Naive thymus-derived CD4-positive, alpha-beta T cell (primary cell): ENCODE measurements at regions of chr13 and their contacts with region 1.

Region 1: DNA sequence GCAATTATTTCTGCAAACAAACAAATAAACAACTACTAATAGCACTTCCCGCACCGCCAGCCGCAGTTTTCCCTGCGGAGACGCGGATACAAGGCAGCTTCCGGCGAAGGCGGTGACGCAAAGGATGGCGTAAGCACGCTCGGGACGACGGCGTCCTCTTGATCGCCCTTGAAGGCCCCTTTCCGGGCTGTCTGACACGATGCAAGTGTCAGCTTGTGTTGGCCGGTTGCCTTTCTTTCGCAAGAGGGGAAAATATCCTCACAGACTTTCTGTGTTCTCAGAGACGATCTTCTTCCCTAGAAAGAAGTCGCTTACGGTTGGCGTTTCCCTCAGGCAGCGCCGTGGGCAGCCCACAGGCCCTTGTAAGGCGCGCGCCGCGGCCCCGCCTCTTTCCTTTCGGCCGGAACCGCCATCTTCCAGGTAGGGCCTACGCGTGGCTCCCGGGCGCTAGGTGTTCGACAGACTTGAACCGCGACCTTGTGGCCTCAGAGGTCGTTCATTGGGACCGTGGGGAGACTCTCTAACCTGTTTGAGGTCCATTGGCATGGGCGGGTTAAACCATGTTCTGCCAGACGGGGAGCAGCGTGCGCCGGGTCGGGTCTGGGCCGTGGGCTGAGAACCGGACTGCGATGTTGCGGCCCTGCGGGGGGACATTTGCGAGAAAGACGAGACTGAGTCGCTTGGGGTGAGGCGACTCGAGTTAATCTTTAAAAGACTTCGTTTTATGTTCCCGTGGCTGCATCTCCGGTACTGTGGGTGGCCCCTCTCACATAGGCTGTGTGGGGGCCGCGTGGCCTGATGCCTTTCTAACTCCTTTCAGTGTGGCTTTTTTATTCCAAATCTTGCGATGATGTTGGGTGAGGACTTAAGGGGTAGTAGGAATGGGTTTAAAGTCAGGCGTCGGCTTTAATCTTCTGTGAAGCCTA is at the start of gene RPL21:
- DNase-seq: peak; percentile 85 to 95 (median 93)
- ATAC-seq: peak; percentile 95
- H3K4me3 ChIP-seq: peak within 1 kb of the TSS; percentile 82
- H3K4me3 Mint-ChIP-seq: peak within 1 kb of the TSS; percentile 93 to 99 (median 98)
- H3K27ac ChIP-seq: peak within 1 kb of the TSS; percentile 98
- H3K27ac Mint-ChIP-seq: peak within 1 kb of the TSS; percentile 98 to 100 (median 99)
- H3K4me1 ChIP-seq: peaks cover 29 to 35% of the 10 kb centered on the region in 2 donors
- H3K4me1 Mint-ChIP-seq: peaks cover 32 to 78% (median 49%) of the 10 kb centered on the region in 7 donors
- H3K27me3 ChIP-seq: no peaks in the 10 kb centered on the region
- H3K27me3 Mint-ChIP-seq: no peaks in the 10 kb centered on the region
- total RNA-seq, gene RPL21: 962 to 2,668 (median 2,384) TPM

Region 2: GRCh38 chr13:26253787-26254582 is 997.4 kb before region 1 on chr13 and contains the start of gene CDK8:
- CTCF ChIA-PET with region 1: no interaction called
- POLR2A ChIA-PET with region 1: no interaction called
- intact Hi-C with region 1: loop called (anchors 1 kb)
- DNase-seq: peak; percentile 83 to 95 (median 93)
- ATAC-seq: peak; percentile 92
- H3K4me3 ChIP-seq: peak within 1 kb of the TSS; percentile 95
- H3K4me3 Mint-ChIP-seq: peak within 1 kb of the TSS; percentile 83 to 98 (median 94)
- H3K27ac ChIP-seq: peak within 1 kb of the TSS; percentile 85
- H3K27ac Mint-ChIP-seq: peak within 1 kb of the TSS; percentile 82 to 93 (median 90)
- H3K4me1 ChIP-seq: peaks cover 17% of the 10 kb centered on the region in 2 donors
- H3K4me1 Mint-ChIP-seq: peaks cover 25 to 50% (median 41%) of the 10 kb centered on the region in 7 donors
- H3K27me3 ChIP-seq: no peaks in the 10 kb centered on the region
- H3K27me3 Mint-ChIP-seq: peaks cover 0 to 2% (median 0%) of the 10 kb centered on the region in 5 donors
- total RNA-seq, gene CDK8: 9.0 to 14.0 (median 11.6) TPM

Region 3: GRCh38 chr13:27171827-27172494 is 79.5 kb before region 1 on chr13:
- CTCF ChIA-PET with region 1: no interaction called
- POLR2A ChIA-PET with region 1: interaction called, 10 read pairs
- intact Hi-C with region 1: loop called (anchors 1 kb)
- DNase-seq: peak; percentile 82 to 91 (median 88)
- ATAC-seq: peak; percentile 94
- H3K4me3 ChIP-seq: peak overlapping the region; percentile 58
- H3K4me3 Mint-ChIP-seq: peak overlapping the region; percentile 78 to 96 (median 88)
- H3K27ac ChIP-seq: peak overlapping the region; percentile 85
- H3K27ac Mint-ChIP-seq: peak overlapping the region; percentile 76 to 95 (median 88)
- H3K4me1 ChIP-seq: peaks cover 24 to 34% of the 10 kb centered on the region in 2 donors
- H3K4me1 Mint-ChIP-seq: peaks cover 23 to 49% (median 44%) of the 10 kb centered on the region in 7 donors
- H3K27me3 ChIP-seq: no peaks in the 10 kb centered on the region
- H3K27me3 Mint-ChIP-seq: no peaks in the 10 kb centered on the region

Region 4: DNA sequence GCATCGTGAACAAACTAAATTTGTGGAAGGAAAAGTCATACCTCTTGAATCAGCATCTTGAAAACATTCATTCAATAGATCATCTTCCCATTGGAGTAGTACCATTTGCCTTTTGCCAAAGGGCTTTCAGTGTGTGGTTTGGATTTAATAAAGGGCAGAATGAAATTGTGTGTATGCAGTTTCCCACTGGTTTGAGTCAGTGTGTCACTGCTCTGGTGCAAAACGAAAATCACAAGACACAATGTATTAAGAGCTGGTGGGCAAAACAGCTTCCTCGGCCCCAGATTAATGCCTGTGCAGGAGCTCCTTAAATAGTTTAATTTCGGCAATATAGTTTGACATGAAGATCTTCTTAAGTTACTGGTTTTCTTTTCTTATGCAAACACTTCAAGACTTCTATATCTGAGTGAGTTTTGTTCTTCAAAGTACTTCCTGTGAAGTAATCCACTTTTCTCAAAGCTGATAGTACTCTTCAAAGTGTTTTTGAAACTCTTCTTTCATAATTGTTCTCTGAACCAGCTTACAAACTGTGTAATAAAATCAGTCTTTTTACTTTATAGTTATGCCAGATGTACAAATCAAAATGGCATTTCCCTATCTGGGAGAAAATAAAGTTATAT is 51.3 kb after region 1 on chr13:
- CTCF ChIA-PET with region 1: no interaction called
- POLR2A ChIA-PET with region 1: interaction called, 4 read pairs
- intact Hi-C with region 1: loop called in 1 of 2 experiments (anchors 2 kb)
- DNase-seq: peak in 6 of 9 donors; percentile 41 to 66 (median 56)
- ATAC-seq: peak; percentile 75
- H3K4me3 ChIP-seq: no peak overlapping the region
- H3K4me3 Mint-ChIP-seq: peak overlapping the region in 8 of 10 donors; percentile 47 to 74 (median 65)
- H3K27ac ChIP-seq: peak overlapping the region; percentile 56
- H3K27ac Mint-ChIP-seq: peak overlapping the region in 8 of 9 donors; percentile 64 to 93 (median 83)
- H3K4me1 ChIP-seq: peaks cover 0 to 20% of the 10 kb centered on the region in 2 donors
- H3K4me1 Mint-ChIP-seq: peaks cover 10 to 60% (median 39%) of the 10 kb centered on the region in 7 donors
- H3K27me3 ChIP-seq: no peaks in the 10 kb centered on the region
- H3K27me3 Mint-ChIP-seq: peaks cover 0 to 2% (median 0%) of the 10 kb centered on the region in 5 donors

Region 5: DNA sequence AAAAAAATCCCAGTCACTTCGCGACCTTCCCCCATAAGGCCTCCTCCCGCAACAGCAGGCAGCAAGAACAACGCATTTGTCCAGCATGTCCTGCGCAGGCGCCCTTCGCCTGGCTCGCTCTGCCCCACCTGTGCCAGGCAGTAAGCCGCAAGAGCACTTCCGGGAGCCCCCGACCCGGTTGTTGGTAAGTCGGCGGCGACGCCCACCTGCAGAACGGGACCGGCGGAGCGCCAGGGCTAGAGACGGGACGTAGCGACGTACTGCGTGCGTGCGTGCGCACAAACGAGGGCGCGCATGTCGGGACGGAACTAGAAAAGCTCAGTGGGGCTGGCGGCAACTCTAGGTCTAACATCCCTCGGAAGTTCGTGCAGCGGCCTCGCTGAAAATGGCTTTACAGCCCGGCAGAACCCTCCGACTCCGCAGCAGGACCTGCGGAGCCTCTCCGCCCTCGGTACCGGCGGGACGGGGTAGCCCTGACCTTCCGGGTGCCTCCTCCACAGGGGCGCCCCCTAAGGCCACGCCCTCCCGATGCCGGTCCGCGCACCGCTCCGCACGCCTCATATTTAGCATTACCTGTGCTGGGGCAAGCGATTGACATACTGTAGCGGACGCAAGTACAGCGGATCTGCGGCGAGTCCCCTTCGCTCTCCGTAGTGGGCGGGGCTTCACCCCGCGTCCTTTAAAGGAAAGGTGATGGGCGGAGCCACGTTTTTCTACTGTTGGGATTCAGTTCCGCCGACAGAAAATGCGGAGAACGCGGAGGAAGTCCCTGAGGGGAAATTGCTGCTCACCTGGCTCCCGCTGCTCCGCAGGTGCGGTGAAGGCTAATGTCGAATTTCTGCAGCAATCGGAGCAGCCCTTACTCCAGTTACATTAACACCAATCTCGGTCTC is 198.8 kb after region 1 on chr13 and contains the start of gene MTIF3:
- CTCF ChIA-PET with region 1: no interaction called
- POLR2A ChIA-PET with region 1: interaction called, 4 read pairs
- intact Hi-C with region 1: loop called (anchors 1 kb)
- DNase-seq: peak; percentile 90 to 99 (median 98)
- ATAC-seq: peak; percentile 89
- H3K4me3 ChIP-seq: peak within 1 kb of the TSS; percentile 82
- H3K4me3 Mint-ChIP-seq: peak within 1 kb of the TSS; percentile 89 to 96 (median 94)
- H3K27ac ChIP-seq: peak within 1 kb of the TSS; percentile 96
- H3K27ac Mint-ChIP-seq: peak within 1 kb of the TSS; percentile 94 to 100 (median 98)
- H3K4me1 ChIP-seq: peaks cover 35 to 41% of the 10 kb centered on the region in 2 donors
- H3K4me1 Mint-ChIP-seq: peaks cover 45 to 75% (median 56%) of the 10 kb centered on the region in 7 donors
- H3K27me3 ChIP-seq: no peaks in the 10 kb centered on the region
- H3K27me3 Mint-ChIP-seq: no peaks in the 10 kb centered on the region
- total RNA-seq, gene MTIF3: 28.4 to 89.6 (median 51.3) TPM